Naive thymus-derived CD4-positive, alpha-beta T cell (primary cell): ENCODE measurements at regions of chr13 and their contacts with region 1.

Region 1: DNA sequence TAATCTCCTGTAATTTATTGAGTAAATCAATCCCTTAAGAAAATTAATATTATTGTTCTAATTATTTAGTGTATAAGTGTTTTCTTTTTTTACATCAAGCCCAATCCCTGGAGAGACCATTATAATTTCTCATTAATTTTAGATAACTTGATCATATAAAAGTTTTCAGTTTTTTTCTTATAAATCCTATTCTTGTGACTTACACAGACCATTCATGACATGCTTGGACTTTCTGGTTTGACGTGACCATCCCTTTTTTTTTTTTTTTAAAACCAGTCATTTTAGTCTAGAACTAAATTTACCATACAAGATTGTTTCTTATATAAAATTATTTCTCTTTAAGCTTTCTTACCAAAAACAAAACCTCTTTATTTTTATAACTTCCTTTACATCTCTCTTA is 5.4 kb upstream of the MTRF1 start:
- DNase-seq: peak in 5 of 9 donors; percentile 14 to 31 (median 23)
- ATAC-seq: no peak
- H3K4me3 ChIP-seq: no peak overlapping the region
- H3K4me3 Mint-ChIP-seq: no peak overlapping the region
- H3K27ac ChIP-seq: no peak overlapping the region
- H3K27ac Mint-ChIP-seq: peak overlapping the region in 2 of 9 donors; percentile 57 to 62
- H3K4me1 ChIP-seq: peaks cover 4 to 23% of the 10 kb centered on the region in 2 donors
- H3K4me1 Mint-ChIP-seq: peaks cover 7 to 50% (median 25%) of the 10 kb centered on the region in 7 donors
- H3K27me3 ChIP-seq: no peaks in the 10 kb centered on the region
- H3K27me3 Mint-ChIP-seq: no peaks in the 10 kb centered on the region

Region 2: DNA sequence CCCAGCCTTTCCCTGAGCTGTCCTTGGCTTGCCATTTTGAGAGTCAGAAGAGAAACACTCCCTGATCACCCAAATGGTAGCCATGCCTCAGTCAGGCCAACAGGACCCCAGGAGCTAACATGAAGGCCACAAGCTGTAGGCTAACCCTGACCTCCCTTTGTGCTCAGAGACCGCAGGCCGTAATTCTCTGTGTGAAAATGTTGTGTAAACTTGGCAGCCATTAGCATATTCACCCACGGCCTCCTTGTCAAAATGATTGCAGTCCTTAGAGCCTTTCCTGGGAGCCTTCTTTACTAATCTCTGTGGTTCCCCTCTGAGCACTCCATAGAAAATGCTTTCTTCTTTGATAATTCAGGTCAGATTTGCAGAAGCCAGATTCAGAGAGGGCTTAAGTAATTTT is 1194.4 kb before region 1 on chr13:
- CTCF ChIA-PET with region 1: no interaction called
- POLR2A ChIA-PET with region 1: no interaction called
- intact Hi-C with region 1: no loop called
- DNase-seq: no peak
- ATAC-seq: no peak
- H3K4me3 ChIP-seq: no peak overlapping the region
- H3K4me3 Mint-ChIP-seq: no peak overlapping the region
- H3K27ac ChIP-seq: no peak overlapping the region
- H3K27ac Mint-ChIP-seq: no peak overlapping the region
- H3K4me1 ChIP-seq: peaks cover 0 to 18% of the 10 kb centered on the region in 2 donors
- H3K4me1 Mint-ChIP-seq: peaks cover 11 to 71% (median 40%) of the 10 kb centered on the region in 7 donors
- H3K27me3 ChIP-seq: no peaks in the 10 kb centered on the region
- H3K27me3 Mint-ChIP-seq: no peaks in the 10 kb centered on the region

Region 3: DNA sequence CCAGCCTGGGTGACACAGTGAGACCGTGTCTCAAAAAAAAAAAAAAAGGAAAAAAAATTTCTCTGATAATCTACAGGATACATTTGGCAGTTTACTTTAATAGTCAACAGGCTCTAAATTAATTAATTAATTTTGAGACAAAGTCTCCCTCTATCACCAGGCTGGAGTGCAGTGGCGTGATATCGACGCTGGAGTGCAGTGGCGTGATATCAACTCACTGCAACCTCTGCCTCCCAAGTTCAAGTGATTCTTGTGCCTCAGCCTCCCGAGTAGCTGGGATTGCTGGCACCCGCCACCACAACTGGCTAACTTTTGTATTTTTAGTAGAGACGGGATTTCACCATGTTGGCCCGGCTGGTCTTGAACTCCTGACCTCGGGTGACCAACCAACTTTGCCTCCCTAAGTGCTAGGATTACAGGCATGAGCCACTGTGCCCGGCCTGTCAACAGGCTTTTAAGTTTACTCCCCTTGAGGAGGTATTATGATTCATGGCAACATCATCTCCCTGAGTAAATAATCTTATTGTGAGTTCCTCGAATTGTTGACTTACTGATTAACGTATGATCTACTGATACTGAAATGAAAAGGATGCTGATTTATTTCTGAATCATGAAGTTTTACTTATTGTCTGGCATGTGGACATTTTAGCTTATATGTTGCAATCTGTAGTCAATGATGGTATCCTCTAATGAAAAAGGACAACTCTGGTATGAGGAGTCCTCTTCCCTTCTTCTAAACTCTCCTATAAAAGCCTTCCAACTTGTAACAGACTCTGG is 15.9 kb after region 1 on chr13:
- CTCF ChIA-PET with region 1: no interaction called
- POLR2A ChIA-PET with region 1: interaction called, 52 read pairs
- intact Hi-C with region 1: loop called in 1 of 2 experiments (anchors 1 kb)
- DNase-seq: no peak
- ATAC-seq: no peak
- H3K4me3 ChIP-seq: no peak overlapping the region
- H3K4me3 Mint-ChIP-seq: peak overlapping the region in 4 of 10 donors; percentile 15 to 77 (median 47)
- H3K27ac ChIP-seq: no peak overlapping the region
- H3K27ac Mint-ChIP-seq: peak overlapping the region in 5 of 9 donors; percentile 81 to 96 (median 95)
- H3K4me1 ChIP-seq: peaks cover 0 to 31% of the 10 kb centered on the region in 2 donors
- H3K4me1 Mint-ChIP-seq: peaks cover 8 to 63% (median 39%) of the 10 kb centered on the region in 7 donors
- H3K27me3 ChIP-seq: no peaks in the 10 kb centered on the region
- H3K27me3 Mint-ChIP-seq: no peaks in the 10 kb centered on the region